Gastrocnemius medialis (tissue), 4 donors: ENCODE measurements at regions of chr9 and their contacts with region 1.

Region 1: GRCh38 chr9:97990266-97990665 is 7.1 kb downstream of the ANP32B start:
- DNase-seq: no peak
- ATAC-seq: no peak
- H3K4me3 ChIP-seq: no peak overlapping the region
- H3K27ac ChIP-seq: no peak overlapping the region
- H3K4me1 ChIP-seq: peaks cover 52 to 63% of the 10 kb centered on the region in 2 donors
- H3K27me3 ChIP-seq: no peaks in the 10 kb centered on the region
- CTCF ChIP-seq: no peak
- POLR2A ChIP-seq: no peak

Region 2: GRCh38 chr9:97938081-97938644 is 52.1 kb before region 1 on chr9 and contains the start of gene HEMGN:
- in situ Hi-C with region 1: loop called in 1 of 4 experiments (anchors 10 kb)
- intact Hi-C with region 1: no loop called
- DNase-seq: no peak
- ATAC-seq: no peak
- H3K4me3 ChIP-seq: no peak within 1 kb of the TSS
- H3K27ac ChIP-seq: no peak within 1 kb of the TSS
- H3K4me1 ChIP-seq: no peaks in the 10 kb centered on the region
- H3K27me3 ChIP-seq: peaks cover 0 to 14% (median 0%) of the 10 kb centered on the region in 3 donors
- CTCF ChIP-seq: no peak
- POLR2A ChIP-seq: no peak
- total RNA-seq, gene HEMGN: 0.16 TPM in 1 of 4 donors, not detected in the others

Region 3: DNA sequence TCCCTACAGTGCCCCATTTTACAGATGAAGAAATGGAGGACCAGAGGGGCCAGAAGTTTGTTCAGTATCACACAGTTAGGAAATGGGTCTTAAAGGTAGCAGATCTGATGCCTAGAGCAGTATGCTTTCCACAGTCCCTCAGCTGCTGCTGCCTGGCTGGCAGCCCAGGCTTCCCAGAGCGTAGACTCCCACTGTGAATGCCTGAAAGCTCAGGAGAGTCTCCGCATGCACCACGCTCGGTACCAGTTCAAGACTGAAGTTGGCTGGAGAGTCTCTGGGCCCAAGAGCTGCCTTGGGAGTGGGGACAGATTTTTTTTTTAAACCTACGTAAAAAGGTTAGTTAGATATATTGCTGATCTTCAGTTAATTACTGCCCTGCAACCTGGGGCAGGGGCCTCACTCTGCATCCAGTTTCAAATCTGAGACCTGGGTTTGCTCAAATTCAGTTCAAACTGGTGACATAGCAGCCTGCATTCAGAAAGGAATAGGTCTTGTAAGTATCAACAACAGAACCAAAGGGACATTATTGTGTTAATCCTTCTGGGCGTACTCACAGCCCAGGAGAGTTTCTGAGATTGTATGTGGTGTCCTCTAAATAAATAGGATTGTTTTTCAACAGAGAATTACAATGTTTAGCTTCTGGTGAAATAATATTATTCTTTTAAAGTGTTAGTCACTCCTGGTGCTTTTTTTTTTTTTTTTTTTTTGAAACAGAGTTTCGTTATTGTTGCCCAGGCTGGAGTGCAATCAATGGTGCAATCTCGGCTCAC is 74.5 kb after region 1 on chr9:
- in situ Hi-C with region 1: no loop called
- intact Hi-C with region 1: no loop called
- DNase-seq: no peak
- ATAC-seq: no peak
- H3K4me3 ChIP-seq: no peak overlapping the region
- H3K27ac ChIP-seq: no peak overlapping the region
- H3K4me1 ChIP-seq: no peaks in the 10 kb centered on the region
- H3K27me3 ChIP-seq: no peaks in the 10 kb centered on the region
- CTCF ChIP-seq: no peak
- POLR2A ChIP-seq: no peak